ENCODE measurements at regions of chr6 and their contacts with region 1.

Region 1: GRCh38 chr6:119961450-119961849 is 611.9 kb upstream of the MAN1A1 start:
- DNase-seq: no peak
- ATAC-seq: no peak
- H3K4me3 ChIP-seq: no peak overlapping the region
- H3K27ac ChIP-seq: no peak overlapping the region
- H3K4me1 ChIP-seq: no peaks in the 10 kb centered on the region
- H3K27me3 ChIP-seq: no peaks in the 10 kb centered on the region
- CTCF ChIP-seq: no peak

Region 2: DNA sequence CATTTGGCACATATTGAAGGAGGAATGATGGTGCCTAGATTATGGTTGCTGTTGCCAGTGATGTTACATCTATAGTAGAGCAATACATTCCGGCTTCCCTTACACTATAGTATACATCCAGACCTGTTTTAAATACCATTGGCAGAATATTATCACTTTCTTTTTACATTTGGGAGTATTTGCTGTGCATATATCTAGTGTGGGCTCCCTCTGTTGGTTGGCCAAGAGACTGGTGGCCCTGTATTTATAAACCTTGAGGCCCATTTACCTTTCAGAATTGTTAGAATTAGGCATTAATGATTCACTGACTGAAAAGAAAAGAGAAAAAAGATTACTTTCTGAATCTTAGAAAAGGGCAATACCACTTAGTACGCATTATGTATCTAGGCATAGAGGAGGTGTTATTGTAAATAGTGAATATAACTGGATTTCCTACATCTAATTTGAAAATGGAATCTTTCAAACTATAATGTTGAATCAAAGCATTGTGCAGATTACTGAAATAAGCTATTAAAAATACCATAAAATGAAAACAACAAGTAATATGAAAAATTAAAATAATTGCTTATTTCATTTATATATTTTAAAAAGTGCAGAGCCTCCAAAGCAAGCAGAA is 16.9 kb after region 1 on chr6:
- intact Hi-C with region 1: no loop called
- DNase-seq: no peak
- ATAC-seq: peak in 1 of 8 donors; percentile 23
- H3K4me3 ChIP-seq: no peak overlapping the region
- H3K27ac ChIP-seq: no peak overlapping the region
- H3K4me1 ChIP-seq: no peaks in the 10 kb centered on the region
- H3K27me3 ChIP-seq: no peaks in the 10 kb centered on the region
- CTCF ChIP-seq: peak in 7 of 9 donors; percentile 30 to 54 (median 43)

Region 3: DNA sequence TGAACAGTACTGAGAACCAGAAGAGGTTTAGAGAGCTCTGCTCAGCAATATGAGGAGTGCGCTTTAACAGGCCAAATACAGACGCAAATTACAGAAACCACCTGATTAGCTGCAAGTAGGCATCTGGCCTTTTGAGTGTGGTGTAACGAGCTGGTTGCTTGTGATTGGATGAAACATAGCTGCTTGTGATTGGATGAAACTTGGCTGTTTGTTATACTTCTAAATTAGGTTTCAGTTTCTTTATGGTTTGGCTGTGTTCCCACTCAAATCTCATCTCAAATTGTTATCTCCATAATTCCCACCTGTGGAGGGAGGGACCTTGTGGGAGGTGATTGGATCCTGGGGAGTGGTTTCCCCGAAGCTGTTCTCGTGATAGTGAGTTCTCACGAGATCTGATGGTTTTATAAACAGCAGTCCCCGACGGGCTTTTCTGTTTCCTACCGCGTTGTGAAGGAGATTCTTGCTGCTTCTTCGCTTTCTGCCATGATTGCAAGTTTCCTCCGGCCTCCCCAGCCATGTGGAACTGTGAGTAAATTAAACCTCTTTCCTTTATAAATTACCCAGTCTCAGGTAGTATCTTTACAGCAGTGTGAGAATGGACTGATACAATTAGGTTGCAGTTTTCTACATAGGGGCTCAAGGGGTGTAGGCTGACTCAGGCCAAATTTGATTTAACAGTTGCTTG is 44.0 kb after region 1 on chr6:
- intact Hi-C with region 1: no loop called
- DNase-seq: no peak
- ATAC-seq: no peak
- H3K4me3 ChIP-seq: no peak overlapping the region
- H3K27ac ChIP-seq: no peak overlapping the region
- H3K4me1 ChIP-seq: no peaks in the 10 kb centered on the region
- H3K27me3 ChIP-seq: no peaks in the 10 kb centered on the region
- CTCF ChIP-seq: no peak

Region 4: GRCh38 chr6:120348926-120349325 is 387.5 kb after region 1 on chr6:
- intact Hi-C with region 1: loop called in 1 of 10 experiments (anchors 5 kb)
- DNase-seq: no peak
- ATAC-seq: no peak
- H3K4me3 ChIP-seq: no peak overlapping the region
- H3K27ac ChIP-seq: no peak overlapping the region
- H3K4me1 ChIP-seq: no peaks in the 10 kb centered on the region
- H3K27me3 ChIP-seq: no peaks in the 10 kb centered on the region
- CTCF ChIP-seq: no peak